Transverse colon (tissue), 4 donors: ENCODE measurements at regions of chr4 and their contacts with region 1.

Region 1: DNA sequence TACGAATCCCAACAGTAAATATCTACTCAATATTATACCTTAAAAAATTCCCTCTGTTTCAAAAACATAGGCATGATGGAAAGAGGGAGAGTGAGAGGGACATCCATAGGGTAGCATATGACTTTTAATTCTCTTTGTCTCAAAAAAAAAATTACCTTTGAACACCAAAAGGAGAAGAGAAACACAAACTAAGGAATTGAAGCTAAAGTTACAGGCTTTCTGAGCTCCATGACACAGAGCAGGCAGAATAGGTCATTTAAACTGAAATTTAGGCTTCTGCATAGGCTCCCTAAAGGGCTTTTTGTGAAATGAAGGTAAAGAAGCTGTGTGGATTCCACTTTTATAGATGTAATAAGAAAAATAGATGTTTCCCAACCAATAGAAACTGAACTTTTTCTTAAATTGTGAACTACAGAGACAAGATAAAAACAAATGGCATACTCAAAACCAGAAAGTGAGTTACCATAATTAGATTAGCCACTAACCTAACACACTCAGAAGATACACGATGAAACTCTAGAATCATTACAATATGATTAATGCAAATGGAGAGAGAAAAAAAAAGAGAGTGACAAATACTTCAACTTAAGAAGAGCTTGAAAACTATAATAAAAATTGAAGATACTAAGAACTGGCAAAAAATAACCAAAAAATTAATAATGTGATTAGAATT is 584.6 kb downstream of the GABRG1 start:
- DNase-seq: no peak
- H3K4me3 ChIP-seq: no peak overlapping the region
- H3K27ac ChIP-seq: no peak overlapping the region
- H3K4me1 ChIP-seq: no peaks in the 10 kb centered on the region
- H3K27me3 ChIP-seq: no peaks in the 10 kb centered on the region
- CTCF ChIP-seq: no peak
- EP300 ChIP-seq: no peak
- POLR2A ChIP-seq: no peak

Region 2: GRCh38 chr4:45554423-45554822 is 15.1 kb after region 1 on chr4:
- in situ Hi-C with region 1: no loop called
- intact Hi-C with region 1: loop called (anchors 1 kb)
- DNase-seq: no peak
- H3K4me3 ChIP-seq: no peak overlapping the region
- H3K27ac ChIP-seq: no peak overlapping the region
- H3K4me1 ChIP-seq: no peaks in the 10 kb centered on the region
- H3K27me3 ChIP-seq: no peaks in the 10 kb centered on the region
- CTCF ChIP-seq: no peak
- EP300 ChIP-seq: no peak
- POLR2A ChIP-seq: no peak